ENCODE measurements at regions of chr18 and their contacts with region 1.

Region 1: DNA sequence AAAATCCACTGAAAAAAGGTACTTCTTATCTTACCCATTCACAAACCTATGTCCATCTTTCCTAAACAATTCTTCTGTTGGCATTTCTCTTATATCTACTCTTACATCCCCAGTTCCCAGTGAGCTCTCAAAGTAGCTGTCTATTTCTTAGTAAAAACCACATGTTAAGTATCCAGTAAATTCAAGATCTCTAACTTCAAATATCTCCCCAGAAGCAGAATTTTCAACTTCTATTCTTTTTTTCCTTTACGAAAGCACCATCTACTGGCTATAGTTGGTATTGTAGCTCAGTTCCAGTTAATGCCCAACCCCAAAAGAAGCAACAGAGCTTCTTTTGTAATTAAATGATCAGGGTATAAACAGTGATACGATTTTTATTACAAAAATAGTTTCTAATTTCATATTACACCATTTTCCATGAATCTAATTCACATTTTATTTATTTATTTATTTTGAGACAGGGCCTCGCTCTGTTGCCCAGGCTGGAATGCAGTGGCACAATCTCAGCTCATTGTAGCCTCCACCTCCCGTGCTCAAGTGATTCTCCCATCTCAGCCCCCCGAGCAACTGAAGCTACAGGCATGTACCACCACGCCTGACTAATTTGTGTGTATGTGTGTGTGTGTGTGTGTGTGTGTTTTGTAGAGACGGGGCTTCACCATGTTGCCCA is 28.5 kb downstream of the HRH4 start:
- DNase-seq: peak; percentile 63
- ATAC-seq: peak; percentile 59
- H3K4me3 ChIP-seq: no peak overlapping the region
- H3K4me3 Mint-ChIP-seq: no peak overlapping the region
- H3K27ac ChIP-seq: no peak overlapping the region
- H3K27ac Mint-ChIP-seq: no peak overlapping the region
- H3K4me1 ChIP-seq: peaks cover 18 to 24% of the 10 kb centered on the region in 2 donors
- H3K4me1 Mint-ChIP-seq: peaks cover 27% of the 10 kb centered on the region
- H3K27me3 ChIP-seq: peaks cover 0 to 8% (median 0%) of the 10 kb centered on the region in 4 experiments
- H3K27me3 Mint-ChIP-seq: peaks cover 3% of the 10 kb centered on the region
- CTCF ChIP-seq: peak; percentile 96

Region 2: DNA sequence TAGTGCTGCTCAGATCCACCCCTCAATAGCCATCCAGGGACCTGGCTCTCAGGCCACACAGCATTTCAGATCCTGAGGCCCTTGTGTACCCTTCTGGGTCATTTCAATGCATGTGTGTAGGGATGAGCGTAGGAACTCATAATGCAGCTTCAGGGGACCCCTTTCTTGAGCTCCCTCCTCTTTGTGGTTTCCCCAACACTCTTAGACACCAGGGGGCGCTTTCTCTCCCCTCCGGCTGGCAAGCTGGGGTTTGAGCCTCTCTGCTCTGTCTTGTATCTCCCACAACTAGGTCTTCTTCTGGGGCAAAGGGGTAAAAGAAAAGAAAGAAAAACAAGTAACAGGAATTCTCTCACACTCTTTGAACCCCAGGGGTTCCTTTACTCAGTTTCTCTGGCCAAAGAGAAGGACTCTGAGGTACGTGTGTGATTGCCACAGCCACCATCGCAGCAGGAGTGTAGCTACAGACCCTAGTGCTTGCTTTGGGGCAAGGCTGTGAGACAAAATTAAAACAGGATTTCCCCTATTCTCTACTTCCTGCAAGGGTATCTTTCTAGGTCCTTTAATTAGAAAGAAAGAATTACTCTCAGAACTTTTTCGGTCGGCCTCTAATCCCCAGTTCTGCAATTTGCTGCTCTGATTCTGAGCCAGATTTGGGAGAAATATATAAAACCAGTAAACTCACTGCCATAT is 312.1 kb before region 1 on chr18:
- CTCF ChIA-PET with region 1: interaction called, 60 read pairs
- POLR2A ChIA-PET with region 1: no interaction called
- intact Hi-C with region 1: no loop called
- DNase-seq: peak; percentile 82
- ATAC-seq: peak; percentile 88
- H3K4me3 ChIP-seq: peak overlapping the region in 4 of 5 experiments; percentile 15 to 56 (median 38)
- H3K4me3 Mint-ChIP-seq: peak overlapping the region; percentile 81
- H3K27ac ChIP-seq: peak overlapping the region; percentile 78 to 87
- H3K27ac Mint-ChIP-seq: peak overlapping the region; percentile 92
- H3K4me1 ChIP-seq: peaks cover 22 to 24% of the 10 kb centered on the region in 2 donors
- H3K4me1 Mint-ChIP-seq: peaks cover 25% of the 10 kb centered on the region
- H3K27me3 ChIP-seq: no peaks in the 10 kb centered on the region
- H3K27me3 Mint-ChIP-seq: no peaks in the 10 kb centered on the region
- CTCF ChIP-seq: peak; percentile 68

Region 3: GRCh38 chr18:24362758-24363157 is 126.2 kb before region 1 on chr18:
- CTCF ChIA-PET with region 1: interaction called, 179 read pairs
- POLR2A ChIA-PET with region 1: no interaction called
- intact Hi-C with region 1: loop called (anchors 1 kb)
- DNase-seq: no peak
- ATAC-seq: no peak
- H3K4me3 ChIP-seq: no peak overlapping the region
- H3K4me3 Mint-ChIP-seq: no peak overlapping the region
- H3K27ac ChIP-seq: no peak overlapping the region
- H3K27ac Mint-ChIP-seq: no peak overlapping the region
- H3K4me1 ChIP-seq: no peaks in the 10 kb centered on the region
- H3K4me1 Mint-ChIP-seq: no peaks in the 10 kb centered on the region
- H3K27me3 ChIP-seq: no peaks in the 10 kb centered on the region
- H3K27me3 Mint-ChIP-seq: no peaks in the 10 kb centered on the region
- CTCF ChIP-seq: no peak

Region 4: GRCh38 chr18:24683965-24684364 is 195.0 kb after region 1 on chr18:
- CTCF ChIA-PET with region 1: no interaction called
- POLR2A ChIA-PET with region 1: no interaction called
- intact Hi-C with region 1: no loop called
- DNase-seq: no peak
- ATAC-seq: no peak
- H3K4me3 ChIP-seq: no peak overlapping the region
- H3K4me3 Mint-ChIP-seq: no peak overlapping the region
- H3K27ac ChIP-seq: no peak overlapping the region
- H3K27ac Mint-ChIP-seq: no peak overlapping the region
- H3K4me1 ChIP-seq: no peaks in the 10 kb centered on the region
- H3K4me1 Mint-ChIP-seq: no peaks in the 10 kb centered on the region
- H3K27me3 ChIP-seq: no peaks in the 10 kb centered on the region
- H3K27me3 Mint-ChIP-seq: peaks cover 3% of the 10 kb centered on the region
- CTCF ChIP-seq: no peak

Region 5: GRCh38 chr18:24726727-24727492 is 238.0 kb after region 1 on chr18:
- CTCF ChIA-PET with region 1: interaction called, 52 read pairs
- POLR2A ChIA-PET with region 1: no interaction called
- intact Hi-C with region 1: no loop called
- DNase-seq: peak; percentile 57
- ATAC-seq: no peak
- H3K4me3 ChIP-seq: no peak overlapping the region
- H3K4me3 Mint-ChIP-seq: no peak overlapping the region
- H3K27ac ChIP-seq: no peak overlapping the region
- H3K27ac Mint-ChIP-seq: no peak overlapping the region
- H3K4me1 ChIP-seq: no peaks in the 10 kb centered on the region
- H3K4me1 Mint-ChIP-seq: peaks cover 2% of the 10 kb centered on the region
- H3K27me3 ChIP-seq: no peaks in the 10 kb centered on the region
- H3K27me3 Mint-ChIP-seq: peaks cover 19% of the 10 kb centered on the region
- CTCF ChIP-seq: peak; percentile 73

Region 6: GRCh38 chr18:24791751-24792560 is 303.0 kb after region 1 on chr18:
- CTCF ChIA-PET with region 1: no interaction called
- POLR2A ChIA-PET with region 1: no interaction called
- intact Hi-C with region 1: no loop called
- DNase-seq: no peak
- ATAC-seq: no peak
- H3K4me3 ChIP-seq: no peak overlapping the region
- H3K4me3 Mint-ChIP-seq: no peak overlapping the region
- H3K27ac ChIP-seq: no peak overlapping the region
- H3K27ac Mint-ChIP-seq: no peak overlapping the region
- H3K4me1 ChIP-seq: no peaks in the 10 kb centered on the region
- H3K4me1 Mint-ChIP-seq: no peaks in the 10 kb centered on the region
- H3K27me3 ChIP-seq: no peaks in the 10 kb centered on the region
- H3K27me3 Mint-ChIP-seq: peaks cover 6% of the 10 kb centered on the region
- CTCF ChIP-seq: no peak

Region 7: GRCh38 chr18:25896178-25896780 is 1407.3 kb after region 1 on chr18:
- CTCF ChIA-PET with region 1: interaction called, 9 read pairs
- POLR2A ChIA-PET with region 1: no interaction called
- intact Hi-C with region 1: loop called (anchors 2 kb)
- DNase-seq: peak; percentile 28
- ATAC-seq: peak; percentile 47
- H3K4me3 ChIP-seq: no peak overlapping the region
- H3K4me3 Mint-ChIP-seq: no peak overlapping the region
- H3K27ac ChIP-seq: no peak overlapping the region
- H3K27ac Mint-ChIP-seq: no peak overlapping the region
- H3K4me1 ChIP-seq: no peaks in the 10 kb centered on the region
- H3K4me1 Mint-ChIP-seq: no peaks in the 10 kb centered on the region
- H3K27me3 ChIP-seq: no peaks in the 10 kb centered on the region
- H3K27me3 Mint-ChIP-seq: peaks cover 18% of the 10 kb centered on the region
- CTCF ChIP-seq: peak; percentile 85

Measured in B cell (primary cell).